ENCODE measurements at regions of chr5 and their contacts with region 1.

Region 1: GRCh38 chr5:67094476-67095300 is 101.9 kb downstream of the CD180 start:
- DNase-seq: no peak
- ATAC-seq: peak; percentile 61

Region 2: DNA sequence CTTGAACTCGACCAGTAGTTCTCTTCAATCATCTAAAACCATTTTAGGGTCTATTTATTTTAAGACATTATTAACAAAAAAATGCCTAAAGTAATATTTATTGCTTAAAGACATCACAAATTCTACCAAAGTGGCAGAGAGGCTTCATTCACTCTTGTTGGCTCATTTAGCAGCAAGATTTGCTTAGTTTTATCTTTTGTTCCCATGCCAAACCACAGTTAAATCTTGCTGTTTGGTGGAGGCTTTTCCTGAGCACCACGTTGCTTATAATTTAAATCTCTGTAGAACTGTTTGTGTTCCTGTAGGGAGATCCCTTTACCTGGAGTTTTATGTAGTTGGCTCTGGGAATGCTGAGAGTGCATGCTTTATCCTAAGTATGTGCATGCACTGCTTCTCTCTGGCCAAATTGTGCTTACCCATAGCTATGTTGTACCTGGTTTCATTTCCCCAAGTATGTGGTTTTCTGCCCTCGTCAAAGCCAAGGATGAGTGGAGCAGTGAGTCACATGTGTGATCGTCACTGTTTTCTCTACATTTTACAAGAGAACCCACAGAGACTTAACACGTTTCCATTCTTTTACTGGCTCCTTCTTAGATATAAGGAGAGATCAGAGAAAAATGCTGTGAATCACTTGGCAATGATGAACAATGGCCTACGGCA is 540.6 kb before region 1 on chr5:
- intact Hi-C with region 1: no loop called
- DNase-seq: no peak
- ATAC-seq: no peak

Region 3: GRCh38 chr5:66974256-66974655 is 120.4 kb before region 1 on chr5:
- intact Hi-C with region 1: no loop called
- DNase-seq: no peak
- ATAC-seq: no peak

Region 4: GRCh38 chr5:67047160-67047559 is 47.5 kb before region 1 on chr5:
- intact Hi-C with region 1: loop called (anchors 5 kb)
- DNase-seq: peak; percentile 75
- ATAC-seq: peak; percentile 89